ENCODE measurements at regions of chr1 and their contacts with region 1.

Region 1: GRCh38 chr1:223133824-223134435 is 9.1 kb downstream of the TLR5 start:
- DNase-seq: peak; percentile 59 to 84 (median 73)
- ATAC-seq: peak; percentile 92
- H3K4me3 ChIP-seq: peak overlapping the region; percentile 41
- H3K4me3 Mint-ChIP-seq: peak overlapping the region; percentile 51 to 84 (median 74)
- H3K27ac ChIP-seq: no peak overlapping the region
- H3K27ac Mint-ChIP-seq: peak overlapping the region in 1 of 9 donors; percentile 41
- H3K4me1 ChIP-seq: peaks cover 4 to 12% of the 10 kb centered on the region in 2 donors
- H3K4me1 Mint-ChIP-seq: peaks cover 13 to 31% (median 22%) of the 10 kb centered on the region in 7 donors
- H3K27me3 ChIP-seq: no peaks in the 10 kb centered on the region
- H3K27me3 Mint-ChIP-seq: peaks cover 0 to 68% (median 5%) of the 10 kb centered on the region in 5 donors

Region 2: GRCh38 chr1:223358826-223359225 is 224.9 kb after region 1 on chr1:
- CTCF ChIA-PET with region 1: interaction called, 79 read pairs
- POLR2A ChIA-PET with region 1: interaction called, 3 read pairs
- intact Hi-C with region 1: loop called in 1 of 2 experiments (anchors 1 kb)
- DNase-seq: peak in 1 of 9 donors; percentile 17
- ATAC-seq: peak; percentile 52
- H3K4me3 ChIP-seq: no peak overlapping the region
- H3K4me3 Mint-ChIP-seq: peak overlapping the region in 1 of 10 donors; percentile 21
- H3K27ac ChIP-seq: no peak overlapping the region
- H3K27ac Mint-ChIP-seq: peak overlapping the region in 3 of 9 donors; percentile 14 to 29 (median 18)
- H3K4me1 ChIP-seq: no peaks in the 10 kb centered on the region
- H3K4me1 Mint-ChIP-seq: peaks cover 7 to 42% (median 28%) of the 10 kb centered on the region in 7 donors
- H3K27me3 ChIP-seq: no peaks in the 10 kb centered on the region
- H3K27me3 Mint-ChIP-seq: peaks cover 0 to 49% (median 0%) of the 10 kb centered on the region in 5 donors

Region 3: GRCh38 chr1:223531742-223532341 is 397.9 kb after region 1 on chr1:
- CTCF ChIA-PET with region 1: no interaction called
- POLR2A ChIA-PET with region 1: no interaction called
- intact Hi-C with region 1: loop called in 1 of 2 experiments (anchors 5 kb)
- DNase-seq: peak in 5 of 9 donors; percentile 11 to 27 (median 19)
- ATAC-seq: peak; percentile 54
- H3K4me3 ChIP-seq: no peak overlapping the region
- H3K4me3 Mint-ChIP-seq: no peak overlapping the region
- H3K27ac ChIP-seq: no peak overlapping the region
- H3K27ac Mint-ChIP-seq: peak overlapping the region in 1 of 9 donors; percentile 2
- H3K4me1 ChIP-seq: no peaks in the 10 kb centered on the region
- H3K4me1 Mint-ChIP-seq: peaks cover 4 to 12% (median 9%) of the 10 kb centered on the region in 7 donors
- H3K27me3 ChIP-seq: no peaks in the 10 kb centered on the region
- H3K27me3 Mint-ChIP-seq: peaks cover 0 to 14% (median 0%) of the 10 kb centered on the region in 5 donors

Region 4: GRCh38 chr1:223628233-223629125 is 494.5 kb after region 1 on chr1:
- CTCF ChIA-PET with region 1: interaction called, 6 read pairs
- POLR2A ChIA-PET with region 1: no interaction called
- intact Hi-C with region 1: loop called in 1 of 2 experiments (anchors 1 kb)
- DNase-seq: peak in 8 of 9 donors; percentile 4 to 34 (median 18)
- ATAC-seq: peak; percentile 57
- H3K4me3 ChIP-seq: no peak overlapping the region
- H3K4me3 Mint-ChIP-seq: no peak overlapping the region
- H3K27ac ChIP-seq: no peak overlapping the region
- H3K27ac Mint-ChIP-seq: no peak overlapping the region
- H3K4me1 ChIP-seq: no peaks in the 10 kb centered on the region
- H3K4me1 Mint-ChIP-seq: peaks cover 0 to 4% (median 0%) of the 10 kb centered on the region in 7 donors
- H3K27me3 ChIP-seq: no peaks in the 10 kb centered on the region
- H3K27me3 Mint-ChIP-seq: peaks cover 0 to 4% (median 0%) of the 10 kb centered on the region in 5 donors

Measured in naive thymus-derived CD4-positive, alpha-beta T cell (primary cell).